ENCODE measurements at regions of chr11 and their contacts with region 1.

Region 1: GRCh38 chr11:65817835-65818742 is 15.7 kb upstream of the SNX32 start:
- DNase-seq: no peak
- H3K4me3 ChIP-seq: peak overlapping the region; percentile 58
- H3K27me3 ChIP-seq: no peaks in the 10 kb centered on the region
- CTCF ChIP-seq: peak; percentile 93

Region 2: GRCh38 chr11:65720237-65720934 is 97.7 kb before region 1 on chr11 and contains the start of gene RNASEH2C:
- CTCF ChIA-PET with region 1: interaction called, 14 read pairs
- POLR2A ChIA-PET with region 1: no interaction called
- DNase-seq: peak; percentile 30
- H3K4me3 ChIP-seq: peak within 1 kb of the TSS; percentile 60
- H3K27me3 ChIP-seq: no peaks in the 10 kb centered on the region
- CTCF ChIP-seq: no peak
- polyA plus RNA-seq, gene RNASEH2C: 28.0 and 33.9 TPM in 2 replicates

Region 3: GRCh38 chr11:65773784-65774411 is 44.2 kb before region 1 on chr11:
- CTCF ChIA-PET with region 1: interaction called, 43 read pairs
- POLR2A ChIA-PET with region 1: no interaction called
- DNase-seq: no peak
- H3K4me3 ChIP-seq: no peak overlapping the region
- H3K27me3 ChIP-seq: no peaks in the 10 kb centered on the region
- CTCF ChIP-seq: peak; percentile 18; the same call in 1 of the 2 replicates

Region 4: GRCh38 chr11:65802841-65803240 is 15.2 kb before region 1 on chr11:
- CTCF ChIA-PET with region 1: interaction called, 15 read pairs
- POLR2A ChIA-PET with region 1: no interaction called
- DNase-seq: no peak
- H3K4me3 ChIP-seq: no peak overlapping the region
- H3K27me3 ChIP-seq: peaks cover 19% of the 10 kb centered on the region
- CTCF ChIP-seq: no peak

Region 5: DNA sequence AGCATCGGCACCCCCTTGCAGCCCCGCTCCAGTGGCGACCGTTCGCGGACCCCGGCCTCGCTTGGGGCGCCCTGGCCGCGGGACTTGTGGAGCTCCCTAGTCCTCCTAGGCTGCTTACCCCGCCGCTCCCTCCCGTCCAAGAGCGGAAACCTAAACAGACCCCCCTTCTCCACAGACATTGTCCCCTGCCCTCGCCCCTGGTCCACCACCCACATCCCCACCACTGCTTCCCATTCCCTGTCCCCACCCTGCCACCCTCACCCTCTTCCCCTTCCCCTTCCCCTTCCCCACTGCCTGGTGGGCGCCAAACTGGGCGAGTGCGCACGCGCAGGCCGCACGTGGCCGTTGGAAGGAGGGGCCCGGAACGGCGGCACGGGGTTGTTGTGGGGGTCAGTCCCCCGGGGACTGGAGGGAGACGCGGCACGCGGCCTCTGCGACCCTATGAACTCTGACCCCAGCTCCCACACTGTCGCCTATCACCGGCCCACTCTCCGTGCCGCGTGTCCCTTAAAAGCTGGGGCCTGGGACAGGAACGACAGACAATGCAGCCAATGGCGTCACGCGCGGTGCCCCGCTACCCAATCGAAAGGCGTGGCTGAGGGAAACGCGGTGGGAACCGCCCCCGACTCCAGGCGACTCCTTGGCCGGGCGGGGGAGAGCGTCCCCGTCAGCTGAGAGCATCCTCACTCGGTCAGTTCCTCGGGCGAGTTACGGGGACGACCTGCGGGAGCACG is 15.4 kb after region 1 on chr11 and contains the start of gene SNX32:
- CTCF ChIA-PET with region 1: interaction called, 24 read pairs
- POLR2A ChIA-PET with region 1: no interaction called
- DNase-seq: peak; percentile 27
- H3K4me3 ChIP-seq: peak within 1 kb of the TSS; percentile 60
- H3K27me3 ChIP-seq: peaks cover 16% of the 10 kb centered on the region
- CTCF ChIP-seq: no peak
- polyA plus RNA-seq, gene SNX32: 0.13 and 0.22 TPM in 2 replicates

Measured in BJ (cell line).